ENCODE measurements at regions of chr6 and their contacts with region 1.

Region 1: GRCh38 chr6:53432318-53433161 is 83.8 kb upstream of the ELOVL5 start:
- DNase-seq: no peak
- ATAC-seq: peak; percentile 44
- H3K4me3 ChIP-seq: no peak overlapping the region
- H3K27ac ChIP-seq: no peak overlapping the region
- H3K4me1 ChIP-seq: no peaks in the 10 kb centered on the region
- H3K27me3 ChIP-seq: no peaks in the 10 kb centered on the region
- CTCF ChIP-seq: no peak
- EP300 ChIP-seq: no peak
- POLR2A ChIP-seq: no peak
- RAD21 ChIP-seq: no peak

Region 2: DNA sequence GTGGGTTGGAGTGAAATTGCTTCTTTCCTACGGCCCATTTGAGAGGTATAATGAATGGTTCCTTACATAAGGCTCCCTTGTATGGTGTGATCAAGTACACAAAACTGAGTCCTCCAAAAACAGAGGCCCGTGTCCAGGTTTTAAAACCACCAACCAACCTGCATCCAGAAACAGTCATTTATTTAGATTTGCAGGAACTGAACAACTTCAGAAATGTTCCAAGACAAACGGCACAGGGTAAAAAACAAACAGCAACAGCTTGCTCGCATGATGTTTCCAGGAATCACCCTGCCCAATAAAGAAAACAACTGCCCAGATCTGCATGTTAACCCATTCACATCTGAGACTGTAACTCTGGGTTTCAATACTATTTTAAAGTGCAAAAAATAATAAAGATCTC is 815.5 kb before region 1 on chr6:
- CTCF ChIA-PET with region 1: no interaction called
- POLR2A ChIA-PET with region 1: no interaction called
- RAD21 ChIA-PET with region 1: no interaction called
- SMC1A ChIA-PET with region 1: no interaction called
- in situ Hi-C with region 1: no loop called
- intact Hi-C with region 1: no loop called
- DNase-seq: no peak
- ATAC-seq: no peak
- H3K4me3 ChIP-seq: no peak overlapping the region
- H3K27ac ChIP-seq: no peak overlapping the region
- H3K4me1 ChIP-seq: no peaks in the 10 kb centered on the region
- H3K27me3 ChIP-seq: no peaks in the 10 kb centered on the region; a peak in 1 of 4 replicates
- CTCF ChIP-seq: no peak
- EP300 ChIP-seq: no peak
- POLR2A ChIP-seq: no peak
- RAD21 ChIP-seq: no peak

Region 3: DNA sequence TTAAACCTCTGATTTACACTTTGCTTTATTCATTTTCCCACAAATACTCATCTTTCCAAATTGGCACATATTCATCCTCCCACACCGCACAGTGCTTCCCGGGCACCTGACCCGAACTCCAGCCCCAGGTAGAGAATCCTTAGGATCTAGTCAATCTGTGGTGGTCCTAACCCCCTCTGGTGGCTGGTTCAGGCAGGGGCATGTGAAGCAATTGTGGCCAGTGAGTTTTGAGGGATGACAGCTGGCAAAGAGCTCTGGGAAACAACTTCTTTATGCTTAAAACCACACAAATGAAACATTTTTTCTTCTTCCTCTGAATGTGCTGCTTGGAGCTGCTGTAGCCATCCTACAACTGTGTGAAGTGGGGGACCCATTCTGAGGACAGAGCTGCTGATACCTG is 138.4 kb before region 1 on chr6:
- CTCF ChIA-PET with region 1: interaction called, 8 read pairs
- POLR2A ChIA-PET with region 1: no interaction called
- RAD21 ChIA-PET with region 1: interaction called, 4 read pairs
- SMC1A ChIA-PET with region 1: interaction called, 18 read pairs
- in situ Hi-C with region 1: no loop called
- intact Hi-C with region 1: no loop called
- DNase-seq: no peak
- ATAC-seq: peak; percentile 61
- H3K4me3 ChIP-seq: no peak overlapping the region
- H3K27ac ChIP-seq: no peak overlapping the region
- H3K4me1 ChIP-seq: no peaks in the 10 kb centered on the region
- H3K27me3 ChIP-seq: no peaks in the 10 kb centered on the region
- CTCF ChIP-seq: peak; percentile 36 to 61 (median 60); a peak in 5 of 6 replicates
- EP300 ChIP-seq: no peak
- POLR2A ChIP-seq: no peak
- RAD21 ChIP-seq: peak; percentile 58

Region 4: DNA sequence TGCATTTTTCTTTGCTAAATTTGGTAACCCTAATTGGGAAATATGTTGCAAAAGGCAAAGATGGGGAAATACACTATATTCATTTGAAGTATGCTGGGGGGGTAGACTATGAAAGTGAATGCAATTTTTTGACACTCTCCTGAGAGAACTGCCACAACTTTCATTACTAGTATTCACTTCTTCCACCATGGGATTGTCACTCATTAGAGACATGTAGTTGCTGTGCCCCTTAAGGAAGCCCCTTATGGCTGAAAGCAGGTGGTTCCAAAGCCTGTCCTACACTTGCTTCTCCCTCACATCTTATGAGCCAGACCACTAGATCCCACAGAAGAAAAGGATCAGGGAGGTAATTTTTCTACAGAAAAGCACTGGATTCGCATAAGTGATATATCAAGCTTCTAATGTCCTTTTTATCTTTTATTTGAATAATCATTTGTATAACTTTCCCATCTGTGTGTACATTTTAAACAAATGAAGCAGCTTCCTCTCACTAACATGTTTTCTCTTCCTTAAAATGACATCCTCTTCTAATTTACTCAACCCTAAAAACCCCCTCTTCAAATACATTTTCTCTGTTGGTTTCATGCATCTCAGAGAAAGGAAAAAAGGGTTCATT is 28.6 kb after region 1 on chr6:
- CTCF ChIA-PET with region 1: interaction called, 33 read pairs
- POLR2A ChIA-PET with region 1: interaction called, 3 read pairs
- RAD21 ChIA-PET with region 1: interaction called, 53 read pairs
- SMC1A ChIA-PET with region 1: interaction called, 229 read pairs
- in situ Hi-C with region 1: no loop called
- intact Hi-C with region 1: loop called (anchors 5 kb)
- DNase-seq: peak; percentile 65
- ATAC-seq: peak; percentile 81
- H3K4me3 ChIP-seq: 0 out of 2 replicates have a peak overlapping the region, but pooled peaks have one; percentile 30
- H3K27ac ChIP-seq: peak overlapping the region; percentile 41; the same call in 1 of the 2 replicates
- H3K4me1 ChIP-seq: no peaks in the 10 kb centered on the region
- H3K27me3 ChIP-seq: no peaks in the 10 kb centered on the region
- CTCF ChIP-seq: no peak
- EP300 ChIP-seq: peak; percentile 40 to 60; a peak in 2 of 4 replicates
- POLR2A ChIP-seq: no peak
- RAD21 ChIP-seq: no peak